CD14-positive monocyte (primary cell): ENCODE measurements at regions of chr5 and their contacts with region 1.

Region 1: DNA sequence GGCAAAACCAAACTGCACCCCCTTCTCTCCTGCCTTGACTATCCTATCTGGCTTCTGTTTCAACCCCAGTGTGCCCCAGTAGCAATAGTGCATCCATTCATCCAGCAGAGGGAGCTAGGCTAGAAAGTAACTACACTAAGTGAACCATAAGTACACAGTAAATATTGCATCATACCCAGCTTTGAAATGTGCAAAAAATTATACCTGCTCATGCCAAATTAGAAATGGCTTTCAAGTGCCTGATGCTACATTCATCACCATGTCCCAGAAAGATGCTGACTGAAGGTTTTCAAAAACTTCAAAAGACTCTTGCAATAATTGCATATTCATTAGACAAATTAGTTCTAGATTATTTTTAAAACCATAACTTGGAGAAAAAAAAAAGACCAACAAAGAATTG is 153.5 kb downstream of the PRELID2 start:
- DNase-seq: peak; percentile 61 to 81 (median 71)
- H3K4me3 ChIP-seq: no peak overlapping the region
- H3K4me3 Mint-ChIP-seq: no peak overlapping the region
- H3K27ac ChIP-seq: no peak overlapping the region
- H3K27ac Mint-ChIP-seq: no peak overlapping the region
- H3K4me1 ChIP-seq: peaks cover 0 to 4% of the 10 kb centered on the region in 2 donors
- H3K4me1 Mint-ChIP-seq: peaks cover 9% of the 10 kb centered on the region
- H3K27me3 ChIP-seq: no peaks in the 10 kb centered on the region
- H3K27me3 Mint-ChIP-seq: peaks cover 0 to 1% (median 0%) of the 10 kb centered on the region in 3 donors
- CTCF ChIP-seq: peak; percentile 89

Region 2: DNA sequence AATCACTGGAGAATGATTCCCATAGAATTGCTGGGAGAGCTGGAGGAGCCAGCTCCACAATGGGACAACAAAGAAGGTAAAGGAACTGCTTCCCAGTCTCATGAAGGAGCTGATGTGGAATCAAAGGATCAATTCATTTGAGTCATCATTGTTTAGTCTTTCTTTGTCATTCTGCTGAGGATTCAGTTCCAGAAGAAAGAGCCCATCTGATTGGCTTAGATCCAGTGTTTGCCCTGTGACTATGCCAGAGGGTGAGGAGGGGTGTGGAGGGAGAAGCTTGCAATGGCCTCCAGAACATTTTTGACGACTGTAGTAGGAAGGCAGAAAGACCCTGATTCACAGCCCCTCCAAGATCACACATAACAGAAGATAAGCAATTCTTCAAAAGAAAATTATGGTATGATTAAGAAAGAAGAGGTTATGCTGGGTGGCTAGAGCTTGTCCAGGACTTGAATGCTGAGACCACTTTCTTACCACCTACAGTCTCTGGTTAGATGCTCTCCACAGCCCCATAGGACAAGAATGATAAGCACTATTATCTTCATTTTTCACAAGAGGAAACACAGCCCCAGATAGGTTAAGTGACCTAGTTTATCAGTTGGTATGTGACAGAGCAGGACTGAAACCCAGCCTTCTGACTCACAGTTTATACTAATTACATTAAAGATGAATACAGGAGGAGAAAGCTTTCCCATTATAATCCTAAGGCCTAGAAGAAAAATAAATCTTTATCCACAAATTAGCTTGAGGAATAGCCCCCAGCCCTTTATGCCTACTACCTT is 209.7 kb before region 1 on chr5:
- intact Hi-C with region 1: no loop called
- DNase-seq: no peak
- H3K4me3 ChIP-seq: no peak overlapping the region
- H3K4me3 Mint-ChIP-seq: no peak overlapping the region
- H3K27ac ChIP-seq: no peak overlapping the region
- H3K27ac Mint-ChIP-seq: no peak overlapping the region
- H3K4me1 ChIP-seq: no peaks in the 10 kb centered on the region
- H3K4me1 Mint-ChIP-seq: no peaks in the 10 kb centered on the region
- H3K27me3 ChIP-seq: no peaks in the 10 kb centered on the region
- H3K27me3 Mint-ChIP-seq: no peaks in the 10 kb centered on the region
- CTCF ChIP-seq: no peak

Region 3: DNA sequence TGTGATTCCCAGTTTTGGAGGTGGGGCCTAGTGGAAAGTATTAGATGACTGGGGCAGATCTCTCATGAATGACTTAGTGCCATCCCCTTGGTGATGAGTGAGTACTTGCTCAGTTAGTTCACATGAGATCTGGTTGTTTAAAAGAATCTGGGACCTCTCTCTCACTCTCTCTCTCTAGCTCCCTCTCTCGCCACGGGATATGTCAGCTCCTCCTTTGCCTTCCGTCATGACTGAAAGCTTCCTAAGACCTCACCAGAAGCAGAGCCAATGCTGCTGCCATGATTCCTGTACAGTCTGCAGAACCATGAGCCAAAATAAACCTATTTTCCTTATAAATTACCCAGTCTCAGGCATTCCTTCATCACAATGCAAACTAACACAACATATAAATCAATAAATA is 23.3 kb before region 1 on chr5:
- intact Hi-C with region 1: no loop called
- DNase-seq: no peak
- H3K4me3 ChIP-seq: no peak overlapping the region
- H3K4me3 Mint-ChIP-seq: no peak overlapping the region
- H3K27ac ChIP-seq: no peak overlapping the region
- H3K27ac Mint-ChIP-seq: no peak overlapping the region
- H3K4me1 ChIP-seq: no peaks in the 10 kb centered on the region
- H3K4me1 Mint-ChIP-seq: no peaks in the 10 kb centered on the region
- H3K27me3 ChIP-seq: no peaks in the 10 kb centered on the region
- H3K27me3 Mint-ChIP-seq: no peaks in the 10 kb centered on the region
- CTCF ChIP-seq: no peak

Region 4: DNA sequence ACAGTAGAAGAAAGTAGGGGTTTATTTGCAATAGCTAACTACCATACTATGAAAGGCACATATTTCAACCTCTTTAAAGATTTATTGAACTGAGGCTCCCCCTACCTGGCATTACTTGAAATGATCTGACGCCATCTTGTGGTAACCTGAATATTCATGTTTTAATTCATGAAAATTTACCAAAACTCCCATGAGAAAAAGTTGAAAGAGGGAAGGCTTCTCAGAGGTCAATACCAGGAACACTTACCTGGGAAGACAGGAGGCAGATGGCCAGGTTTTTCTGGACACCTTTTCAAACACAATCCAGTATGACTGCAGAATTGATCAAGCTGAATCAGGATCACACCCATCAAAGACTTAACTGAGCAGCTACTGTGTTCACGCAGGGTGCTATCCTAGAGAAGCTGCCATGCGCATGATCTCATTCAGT is 144.1 kb after region 1 on chr5:
- intact Hi-C with region 1: loop called (anchors 5 to 10 kb)
- DNase-seq: peak; percentile 23 to 48 (median 43)
- H3K4me3 ChIP-seq: no peak overlapping the region
- H3K4me3 Mint-ChIP-seq: no peak overlapping the region
- H3K27ac ChIP-seq: no peak overlapping the region
- H3K27ac Mint-ChIP-seq: no peak overlapping the region
- H3K4me1 ChIP-seq: no peaks in the 10 kb centered on the region
- H3K4me1 Mint-ChIP-seq: peaks cover 4% of the 10 kb centered on the region
- H3K27me3 ChIP-seq: no peaks in the 10 kb centered on the region
- H3K27me3 Mint-ChIP-seq: peaks cover 0 to 2% (median 0%) of the 10 kb centered on the region in 3 donors
- CTCF ChIP-seq: peak; percentile 82

Region 5: GRCh38 chr5:145834917-145835847 is 153.5 kb after region 1 on chr5 and contains the start of gene PRELID2:
- intact Hi-C with region 1: loop called in 1 of 2 experiments (anchors 10 kb)
- DNase-seq: peak; percentile 66 to 76 (median 69)
- H3K4me3 ChIP-seq: peak within 1 kb of the TSS; percentile 45 to 89 (median 45)
- H3K4me3 Mint-ChIP-seq: peak within 1 kb of the TSS; percentile 78 to 91
- H3K27ac ChIP-seq: peak within 1 kb of the TSS in 1 of 2 donors; percentile 7
- H3K27ac Mint-ChIP-seq: no peak within 1 kb of the TSS
- H3K4me1 ChIP-seq: peaks cover 12 to 17% of the 10 kb centered on the region in 2 donors
- H3K4me1 Mint-ChIP-seq: peaks cover 23% of the 10 kb centered on the region
- H3K27me3 ChIP-seq: no peaks in the 10 kb centered on the region
- H3K27me3 Mint-ChIP-seq: peaks cover 0 to 6% (median 1%) of the 10 kb centered on the region in 3 donors
- CTCF ChIP-seq: no peak
- polyA plus RNA-seq, gene PRELID2: 0.77 to 2.0 (median 1.5) TPM

Region 6: DNA sequence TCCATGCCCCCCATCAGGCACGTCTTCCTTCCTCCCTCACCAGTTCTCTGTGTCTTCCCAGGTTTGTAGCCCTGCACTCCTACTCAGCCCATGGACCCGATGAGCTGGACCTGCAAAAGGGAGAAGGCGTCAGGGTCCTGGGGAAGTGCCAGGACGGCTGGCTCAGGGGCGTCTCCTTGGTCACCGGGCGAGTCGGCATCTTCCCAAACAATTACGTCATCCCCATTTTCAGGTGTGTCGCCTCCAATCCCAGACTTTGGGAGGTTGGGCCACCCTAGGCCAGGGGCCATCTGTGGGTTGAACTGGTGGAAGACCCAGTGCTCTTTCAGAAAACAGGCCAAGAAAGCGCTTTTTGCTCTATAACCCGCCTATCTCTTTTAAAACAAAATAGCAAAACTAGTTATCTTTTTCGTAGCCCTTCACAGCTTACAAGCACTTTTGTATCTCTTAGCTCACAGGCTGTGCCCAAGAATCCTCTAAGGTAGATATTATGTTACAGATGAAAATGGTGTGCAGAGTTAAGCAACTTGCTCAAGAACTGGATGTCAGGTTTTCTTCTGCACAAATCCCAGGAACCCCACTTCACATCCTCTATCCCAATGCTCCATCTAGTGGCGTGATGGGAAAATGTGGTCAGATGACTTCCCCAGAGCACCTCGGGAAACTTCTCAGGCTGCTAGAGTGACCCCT is 367.5 kb after region 1 on chr5:
- intact Hi-C with region 1: loop called in 1 of 2 experiments (anchors 10 kb)
- DNase-seq: peak; percentile 32 to 49 (median 40)
- H3K4me3 ChIP-seq: no peak overlapping the region
- H3K4me3 Mint-ChIP-seq: no peak overlapping the region
- H3K27ac ChIP-seq: no peak overlapping the region
- H3K27ac Mint-ChIP-seq: peak overlapping the region in 1 of 7 donors; percentile 21
- H3K4me1 ChIP-seq: no peaks in the 10 kb centered on the region
- H3K4me1 Mint-ChIP-seq: no peaks in the 10 kb centered on the region
- H3K27me3 ChIP-seq: no peaks in the 10 kb centered on the region
- H3K27me3 Mint-ChIP-seq: peaks cover 1 to 5% (median 2%) of the 10 kb centered on the region in 3 donors
- CTCF ChIP-seq: peak; percentile 64